Heart left ventricle (tissue), 16 donors: ENCODE measurements at regions of chr5 and their contacts with region 1.

Region 1: DNA sequence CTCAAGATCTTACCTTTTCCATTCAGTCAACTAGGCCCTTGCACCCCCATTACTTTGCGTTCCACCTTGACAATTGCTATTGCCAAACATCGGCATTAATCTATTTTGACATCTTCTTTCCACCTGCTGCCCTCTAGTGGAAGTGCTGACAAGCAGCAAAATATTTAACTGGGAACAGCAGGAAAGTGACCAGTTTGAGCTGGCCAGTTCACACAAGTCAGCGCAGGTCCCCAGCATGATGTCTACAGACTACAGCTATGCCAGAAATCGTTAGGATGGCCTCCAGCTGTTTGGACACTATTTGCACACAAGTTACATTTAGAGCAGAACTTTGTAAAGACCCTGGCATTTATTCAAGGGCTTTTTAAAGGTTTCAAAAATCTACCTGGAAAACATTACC is 160.1 kb downstream of the GHR start:
- DNase-seq: peak in 4 of 5 donors; percentile 34 to 62 (median 57)
- ATAC-seq: peak in 3 of 4 donors; percentile 21 to 50 (median 45)
- H3K4me3 ChIP-seq: no peak overlapping the region
- H3K27ac ChIP-seq: no peak overlapping the region
- H3K4me1 ChIP-seq: peaks cover 0 to 47% (median 22%) of the 10 kb centered on the region in 12 donors
- H3K27me3 ChIP-seq: no peaks in the 10 kb centered on the region
- CTCF ChIP-seq: peak; percentile 64 to 93 (median 80)
- POLR2A ChIP-seq: no peak

Region 2: GRCh38 chr5:41924872-41925554 is 658.3 kb before region 1 on chr5 and contains the start of gene FBXO4:
- intact Hi-C with region 1: loop called in 1 of 10 experiments (anchors 10 kb)
- DNase-seq: peak; percentile 85 to 93 (median 91)
- ATAC-seq: peak; percentile 96 to 99 (median 98)
- H3K4me3 ChIP-seq: peak within 1 kb of the TSS; percentile 63 to 93 (median 82)
- H3K27ac ChIP-seq: peak within 1 kb of the TSS; percentile 84 to 98 (median 96)
- H3K4me1 ChIP-seq: peaks cover 0 to 25% (median 11%) of the 10 kb centered on the region in 12 donors
- H3K27me3 ChIP-seq: no peaks in the 10 kb centered on the region
- CTCF ChIP-seq: peak; percentile 38 to 85 (median 56)
- POLR2A ChIP-seq: peak in 1 of 2 donors; percentile 42
- total RNA-seq, gene FBXO4: 2.4 to 8.1 (median 3.4) TPM

Region 3: GRCh38 chr5:42514754-42515153 is 68.6 kb before region 1 on chr5:
- intact Hi-C with region 1: loop called in 4 of 10 experiments (anchors 5 to 10 kb)
- DNase-seq: no peak
- ATAC-seq: peak in 2 of 4 donors; percentile 17 to 54
- H3K4me3 ChIP-seq: no peak overlapping the region
- H3K27ac ChIP-seq: no peak overlapping the region
- H3K4me1 ChIP-seq: peaks cover 0 to 47% (median 9%) of the 10 kb centered on the region in 12 donors
- H3K27me3 ChIP-seq: no peaks in the 10 kb centered on the region
- CTCF ChIP-seq: peak in 4 of 12 donors; percentile 15 to 37 (median 24)
- POLR2A ChIP-seq: no peak

Region 4: DNA sequence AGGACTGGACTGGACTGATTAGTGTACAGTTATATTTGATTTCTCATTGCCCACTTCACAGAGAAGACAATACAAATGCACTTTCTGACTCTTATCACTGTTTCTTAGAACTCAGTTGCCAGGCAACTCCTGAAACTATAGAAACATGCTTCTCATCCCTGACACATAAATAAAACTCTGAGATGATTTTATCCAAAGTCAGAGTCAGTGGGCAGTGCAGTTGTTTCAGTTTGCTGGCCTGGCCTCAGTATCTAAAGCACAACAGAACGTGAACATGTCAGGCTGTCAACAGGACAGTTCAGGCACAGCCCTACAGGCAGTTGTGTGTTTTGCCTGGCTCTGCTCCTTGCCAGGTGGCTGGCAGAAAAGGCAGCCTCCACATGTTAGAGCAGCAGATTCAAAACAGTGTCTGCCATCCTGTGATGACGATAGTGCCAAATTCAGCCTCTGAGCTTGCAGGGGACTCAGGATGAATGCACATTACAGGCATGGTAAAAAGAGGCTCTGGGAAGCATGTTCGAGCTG is 108.2 kb after region 1 on chr5:
- intact Hi-C with region 1: loop called in 1 of 10 experiments (anchors 5 kb)
- DNase-seq: peak in 4 of 5 donors; percentile 56 to 79 (median 62)
- ATAC-seq: peak; percentile 98 to 99 (median 99)
- H3K4me3 ChIP-seq: no peak overlapping the region
- H3K27ac ChIP-seq: peak overlapping the region in 6 of 12 donors; percentile 2 to 46 (median 28)
- H3K4me1 ChIP-seq: peaks cover 0 to 18% (median 5%) of the 10 kb centered on the region in 12 donors
- H3K27me3 ChIP-seq: no peaks in the 10 kb centered on the region
- CTCF ChIP-seq: peak in 1 of 12 donors; percentile 8
- POLR2A ChIP-seq: no peak

Region 5: GRCh38 chr5:42889311-42889933 is 306.1 kb after region 1 on chr5:
- intact Hi-C with region 1: loop called in 2 of 10 experiments (anchors 2 to 10 kb)
- DNase-seq: peak in 4 of 5 donors; percentile 68 to 78 (median 74)
- ATAC-seq: peak; percentile 86 to 96 (median 91)
- H3K4me3 ChIP-seq: no peak overlapping the region
- H3K27ac ChIP-seq: no peak overlapping the region
- H3K4me1 ChIP-seq: peaks cover 0 to 7% (median 0%) of the 10 kb centered on the region in 12 donors
- H3K27me3 ChIP-seq: no peaks in the 10 kb centered on the region
- CTCF ChIP-seq: peak; percentile 83 to 99 (median 91)
- POLR2A ChIP-seq: no peak